ENCODE measurements at regions of chr14 and their contacts with region 1.

Region 1: GRCh38 chr14:103808403-103809001 is 38.9 kb downstream of the PPP1R13B start:
- DNase-seq: peak; percentile 77
- ATAC-seq: peak; percentile 81
- H3K4me3 Mint-ChIP-seq: no peak overlapping the region
- H3K27ac Mint-ChIP-seq: no peak overlapping the region
- H3K4me1 Mint-ChIP-seq: no peaks in the 10 kb centered on the region
- H3K27me3 Mint-ChIP-seq: no peaks in the 10 kb centered on the region

Region 2: GRCh38 chr14:103819503-103820307 is 11.2 kb after region 1 on chr14:
- CTCF ChIA-PET with region 1: interaction called, 15 read pairs
- POLR2A ChIA-PET with region 1: no interaction called
- DNase-seq: no peak
- ATAC-seq: no peak
- H3K4me3 Mint-ChIP-seq: no peak overlapping the region
- H3K27ac Mint-ChIP-seq: no peak overlapping the region
- H3K4me1 Mint-ChIP-seq: peaks cover 13% of the 10 kb centered on the region
- H3K27me3 Mint-ChIP-seq: no peaks in the 10 kb centered on the region

Region 3: GRCh38 chr14:103825101-103825500 is 16.6 kb after region 1 on chr14:
- CTCF ChIA-PET with region 1: interaction called, 15 read pairs
- POLR2A ChIA-PET with region 1: no interaction called
- DNase-seq: no peak
- ATAC-seq: no peak
- H3K4me3 Mint-ChIP-seq: no peak overlapping the region
- H3K27ac Mint-ChIP-seq: no peak overlapping the region
- H3K4me1 Mint-ChIP-seq: peaks cover 3% of the 10 kb centered on the region
- H3K27me3 Mint-ChIP-seq: no peaks in the 10 kb centered on the region

Region 4: DNA sequence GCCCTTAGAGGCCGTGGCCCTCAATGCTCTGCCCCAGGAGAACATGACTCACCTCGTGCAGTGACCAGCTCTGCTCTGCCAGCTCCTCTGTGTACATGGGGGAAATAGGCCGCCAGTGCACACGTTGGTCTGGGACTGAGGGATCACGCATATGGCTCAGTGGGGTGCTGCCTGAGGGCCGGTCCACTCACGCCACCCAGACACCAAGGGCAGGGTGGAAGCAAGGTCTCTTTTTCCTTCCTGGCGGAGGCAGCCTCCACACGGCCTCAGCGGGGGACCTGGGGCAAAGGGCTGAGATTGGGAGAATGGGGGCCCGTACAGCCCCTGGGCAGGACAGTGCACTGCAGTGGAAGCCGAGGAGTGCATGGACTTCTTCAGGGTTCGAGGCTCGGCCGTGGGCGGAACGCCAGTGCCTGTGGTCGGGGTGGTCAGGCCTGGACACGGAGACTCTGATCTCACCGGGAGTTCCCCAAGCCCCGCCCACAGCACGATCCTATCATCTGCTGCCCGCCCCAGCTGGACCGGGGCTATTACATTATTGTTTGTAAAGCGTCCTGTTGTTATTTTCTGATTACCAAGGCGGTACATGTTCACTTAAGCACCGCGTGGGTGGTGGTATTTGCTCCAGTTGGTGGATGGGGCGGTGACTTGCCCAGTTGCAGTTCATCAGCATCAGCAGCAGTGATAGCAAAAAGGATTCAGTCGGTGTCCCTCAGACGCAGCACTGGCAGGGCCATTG is 81.0 kb after region 1 on chr14:
- CTCF ChIA-PET with region 1: no interaction called
- POLR2A ChIA-PET with region 1: no interaction called
- DNase-seq: no peak
- ATAC-seq: no peak
- H3K4me3 Mint-ChIP-seq: no peak overlapping the region
- H3K27ac Mint-ChIP-seq: no peak overlapping the region
- H3K4me1 Mint-ChIP-seq: no peaks in the 10 kb centered on the region
- H3K27me3 Mint-ChIP-seq: no peaks in the 10 kb centered on the region

Region 5: GRCh38 chr14:103910262-103910935 is 101.9 kb after region 1 on chr14:
- CTCF ChIA-PET with region 1: interaction called, 112 read pairs
- POLR2A ChIA-PET with region 1: interaction called, 4 read pairs
- DNase-seq: peak; percentile 80
- ATAC-seq: peak; percentile 95
- H3K4me3 Mint-ChIP-seq: peak overlapping the region; percentile 32
- H3K27ac Mint-ChIP-seq: peak overlapping the region; percentile 62
- H3K4me1 Mint-ChIP-seq: peaks cover 27% of the 10 kb centered on the region
- H3K27me3 Mint-ChIP-seq: no peaks in the 10 kb centered on the region

Region 6: GRCh38 chr14:103984196-103984595 is 175.7 kb after region 1 on chr14:
- CTCF ChIA-PET with region 1: interaction called, 15 read pairs
- POLR2A ChIA-PET with region 1: no interaction called
- DNase-seq: no peak
- ATAC-seq: no peak
- H3K4me3 Mint-ChIP-seq: no peak overlapping the region
- H3K27ac Mint-ChIP-seq: no peak overlapping the region
- H3K4me1 Mint-ChIP-seq: no peaks in the 10 kb centered on the region
- H3K27me3 Mint-ChIP-seq: peaks cover 22% of the 10 kb centered on the region

Measured in activated CD8-positive, alpha-beta T cell treated with anti-CD3 and anti-CD28 coated beads, Interleukin-2, amount 10 ng/mL, durations not matched to agents 7 days and 5 days (primary cell).